Lower leg skin (tissue), 4 donors: ENCODE measurements at regions of chr12 and their contacts with region 1.

Region 1: DNA sequence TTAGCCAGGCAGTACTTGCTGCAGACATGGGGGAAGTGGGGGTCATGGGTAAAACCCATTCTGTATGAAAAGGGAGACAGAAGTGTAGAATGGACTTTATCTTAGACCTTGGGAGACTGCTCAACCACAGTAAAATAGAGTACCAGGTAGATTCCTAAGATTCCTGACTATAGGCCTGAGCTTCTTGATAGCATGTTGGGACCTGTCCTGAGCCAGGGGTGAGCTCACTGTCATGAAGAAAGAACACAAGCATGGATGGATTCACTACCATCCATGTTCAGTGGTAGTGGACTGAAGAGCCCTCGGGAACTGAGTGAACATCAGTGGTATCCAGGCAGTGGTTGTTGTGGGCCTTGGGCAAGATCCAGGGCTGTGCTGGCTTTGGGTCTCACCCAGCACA is 1003.8 kb downstream of the TMTC2 start:
- DNase-seq: no peak
- H3K4me3 ChIP-seq: no peak overlapping the region
- CTCF ChIP-seq: no peak
- POLR2A ChIP-seq: no peak

Region 2: GRCh38 chr12:83739607-83740006 is 49.1 kb after region 1 on chr12:
- intact Hi-C with region 1: loop called (anchors 2 kb)
- DNase-seq: no peak
- H3K4me3 ChIP-seq: no peak overlapping the region
- CTCF ChIP-seq: no peak
- POLR2A ChIP-seq: no peak